GM13977 (cell line): ENCODE measurements at regions of chr2 and their contacts with region 1.

Region 1: DNA sequence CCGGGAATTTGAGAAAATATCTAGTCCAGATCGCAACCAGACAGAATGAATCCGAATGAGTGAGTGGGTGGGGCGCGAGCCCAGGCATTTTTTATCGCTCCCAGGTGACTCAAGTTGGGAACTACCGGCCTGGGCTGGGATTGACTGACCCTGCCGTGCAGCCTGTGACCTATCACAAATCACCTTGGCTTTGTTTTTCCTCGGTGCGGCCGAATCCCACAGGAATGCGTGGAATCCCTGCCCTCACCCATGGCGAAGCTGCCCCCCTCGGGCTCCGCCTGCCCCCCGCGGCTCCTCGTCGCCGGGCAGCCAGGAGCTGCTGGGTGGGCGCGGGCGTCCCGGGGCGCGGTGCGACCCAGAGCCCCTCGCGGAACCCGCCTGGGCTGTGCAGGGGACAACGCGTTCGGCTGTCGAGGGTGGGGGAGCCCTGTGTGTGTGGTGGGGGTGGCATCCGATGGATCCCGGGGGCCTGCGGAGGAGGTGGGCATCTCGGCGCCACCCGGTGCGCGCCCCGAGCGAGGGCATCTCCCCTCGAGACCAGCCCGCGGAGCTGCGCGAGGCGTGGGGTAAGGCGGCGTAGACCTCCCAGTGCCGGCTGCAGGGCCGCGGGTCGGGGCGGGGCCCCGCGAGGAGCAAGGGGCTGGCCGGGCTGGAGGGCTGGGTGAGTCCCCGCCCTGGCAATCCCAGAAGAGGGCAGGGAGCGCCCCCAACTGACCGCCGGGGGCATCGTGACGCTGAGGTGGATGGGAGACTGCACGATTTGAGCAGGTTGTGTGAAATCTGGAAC is 16.5 kb downstream of the B3GNT7 start:
- DNase-seq: peak; percentile 86
- CTCF ChIP-seq: peak; percentile 95

Region 2: GRCh38 chr2:230582851-230583283 is 829.2 kb before region 1 on chr2:
- in situ Hi-C with region 1: no loop called
- DNase-seq: peak; percentile 66
- CTCF ChIP-seq: no peak

Region 3: DNA sequence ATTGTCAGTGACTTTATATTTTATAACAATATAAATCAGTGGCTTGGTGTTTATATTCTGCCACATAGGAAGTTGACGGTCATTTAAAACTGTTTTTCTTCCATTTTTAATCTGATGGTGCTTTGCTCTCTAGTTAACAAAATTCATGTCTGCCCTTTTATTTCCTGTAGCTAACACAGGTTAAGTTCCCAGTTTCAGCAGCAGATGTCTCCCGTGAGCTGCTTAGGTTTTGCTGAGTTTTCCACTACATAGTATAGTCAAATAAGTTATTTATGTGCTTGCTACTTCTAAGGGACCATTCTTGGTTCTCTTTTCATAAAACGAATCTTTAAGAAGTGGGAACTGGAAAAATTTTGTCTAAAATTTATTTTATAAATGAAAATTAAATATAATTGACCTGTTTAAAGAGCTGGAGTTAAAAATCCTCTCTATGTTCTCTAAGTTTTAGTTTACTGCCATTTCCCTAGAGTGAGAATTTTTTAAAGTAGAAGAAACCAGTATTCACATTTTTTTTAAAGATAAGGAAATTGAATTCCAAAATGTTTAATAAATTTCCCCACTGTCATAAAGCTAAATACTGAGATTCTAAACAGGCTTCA is 307.8 kb before region 1 on chr2:
- in situ Hi-C with region 1: loop called (anchors 10 kb)
- DNase-seq: peak; percentile 44
- CTCF ChIP-seq: peak; percentile 80

Region 4: GRCh38 chr2:231238689-231239088 is 173.3 kb before region 1 on chr2:
- in situ Hi-C with region 1: loop called (anchors 10 kb)
- DNase-seq: no peak
- CTCF ChIP-seq: no peak